Colonic mucosa (tissue), 4 donors: ENCODE measurements at regions of chr10 and their contacts with region 1.

Region 1: GRCh38 chr10:21533467-21534279 is at the start of gene MLLT10:
- DNase-seq: peak; percentile 88
- H3K4me3 ChIP-seq: peak within 1 kb of the TSS; percentile 69
- H3K27ac ChIP-seq: peak within 1 kb of the TSS; percentile 89
- H3K4me1 ChIP-seq: no peaks in the 10 kb centered on the region
- H3K27me3 ChIP-seq: no peaks in the 10 kb centered on the region
- CTCF ChIP-seq: no peak
- total RNA-seq, gene MLLT10: 17.8 to 25.1 TPM

Region 2: GRCh38 chr10:20839141-20839540 is 694.5 kb before region 1 on chr10:
- intact Hi-C with region 1: no loop called
- DNase-seq: no peak
- H3K4me3 ChIP-seq: no peak overlapping the region
- H3K27ac ChIP-seq: no peak overlapping the region
- H3K4me1 ChIP-seq: no peaks in the 10 kb centered on the region
- H3K27me3 ChIP-seq: no peaks in the 10 kb centered on the region
- CTCF ChIP-seq: no peak

Region 3: DNA sequence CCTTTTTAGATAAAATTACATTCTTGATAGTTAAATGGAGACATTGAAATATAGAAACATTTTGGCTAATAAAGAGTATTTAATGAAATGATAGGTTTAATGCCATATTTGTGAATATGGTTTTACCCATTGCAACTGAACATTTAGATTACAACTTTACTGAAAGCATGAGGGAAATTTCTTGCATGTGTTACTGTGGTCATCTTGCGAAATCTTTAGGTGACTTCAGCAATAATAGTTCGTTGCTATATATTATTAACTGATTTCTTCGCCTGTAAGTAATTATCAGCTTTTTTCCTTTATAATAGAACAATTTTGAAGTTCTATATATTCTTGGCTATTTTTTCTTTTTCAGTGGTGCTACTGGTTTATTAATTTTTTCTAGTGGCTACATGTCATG is 83.6 kb after region 1 on chr10:
- intact Hi-C with region 1: loop called (anchors 10 kb)
- DNase-seq: no peak
- H3K4me3 ChIP-seq: no peak overlapping the region
- H3K27ac ChIP-seq: no peak overlapping the region
- H3K4me1 ChIP-seq: no peaks in the 10 kb centered on the region
- H3K27me3 ChIP-seq: no peaks in the 10 kb centered on the region
- CTCF ChIP-seq: no peak

Region 4: DNA sequence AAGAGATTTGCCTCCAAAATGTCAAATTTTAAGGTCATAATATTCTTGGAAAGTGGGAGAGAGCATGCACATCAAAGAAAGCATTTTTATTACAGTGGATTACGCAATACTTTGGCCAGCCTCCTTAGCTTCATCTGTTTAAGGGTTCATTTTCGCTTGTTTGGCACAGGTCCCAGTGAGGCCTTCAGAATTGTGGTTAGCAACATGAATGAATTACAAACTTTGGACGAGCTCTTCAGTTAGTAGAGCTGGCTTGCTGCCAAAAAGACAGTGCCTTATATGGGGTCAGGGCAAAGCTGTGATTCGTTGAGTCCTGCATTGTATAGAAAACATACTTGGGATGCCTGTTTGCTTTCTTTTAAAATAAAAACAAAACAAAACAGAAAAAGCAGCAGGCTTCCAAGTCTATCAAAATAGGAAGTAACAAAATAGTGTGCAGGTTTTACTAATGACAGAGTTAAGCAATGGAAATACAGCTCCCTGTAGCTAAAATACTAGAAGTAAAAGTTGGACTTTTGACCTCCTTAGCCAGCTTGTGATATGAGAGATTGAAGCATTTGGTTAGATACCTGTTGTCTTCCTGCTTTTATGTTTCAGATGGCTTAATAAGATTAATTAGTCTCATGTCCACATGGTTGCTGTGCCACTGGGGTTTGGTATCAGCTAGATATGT is 191.2 kb after region 1 on chr10:
- intact Hi-C with region 1: loop called (anchors 10 kb)
- DNase-seq: peak; percentile 96
- H3K4me3 ChIP-seq: no peak overlapping the region
- H3K27ac ChIP-seq: no peak overlapping the region
- H3K4me1 ChIP-seq: peaks cover 11% of the 10 kb centered on the region
- H3K27me3 ChIP-seq: no peaks in the 10 kb centered on the region
- CTCF ChIP-seq: no peak